Posterior cingulate gyrus (tissue), 11 donors: ENCODE measurements at regions of chr17 and their contacts with region 1.

Region 1: DNA sequence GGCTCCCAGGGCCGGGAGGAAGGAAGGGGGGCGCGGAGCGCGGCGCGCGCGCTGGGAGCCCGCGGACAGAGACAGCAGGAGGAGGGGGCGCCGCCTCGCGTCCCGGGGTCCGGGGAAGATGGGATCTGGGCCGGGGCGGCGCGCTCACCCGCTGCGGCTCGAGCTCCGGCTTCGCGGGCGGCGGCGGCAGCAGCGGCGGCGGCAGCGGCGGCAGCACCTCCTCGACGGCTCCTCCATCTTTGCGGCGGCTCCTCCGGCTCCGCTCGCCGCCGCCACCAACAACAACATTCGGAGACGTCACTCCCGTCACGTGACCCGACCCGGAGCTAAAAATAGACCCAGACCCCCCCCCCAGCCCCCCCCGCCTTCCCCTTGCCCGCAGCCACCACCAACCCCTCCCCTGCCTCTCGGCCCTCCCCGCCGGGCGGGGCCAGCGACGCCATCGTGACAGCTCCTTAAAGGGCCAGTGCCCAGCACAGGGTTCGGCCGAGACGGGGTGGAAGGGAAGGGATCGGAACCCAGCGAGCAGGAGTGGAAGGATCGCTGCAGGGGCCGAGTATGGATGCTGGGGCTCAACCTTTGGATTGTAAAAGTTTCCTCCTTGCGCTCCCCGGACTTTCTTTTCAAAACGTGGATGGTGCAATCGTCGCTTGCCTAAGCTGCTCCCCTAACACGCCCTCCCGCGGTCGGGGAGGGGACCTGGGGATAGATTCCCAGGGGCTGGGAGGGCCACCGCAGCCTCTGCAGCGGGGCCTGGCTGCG is at the start of gene HDAC5:
- DNase-seq: peak; percentile 95 to 100 (median 97)

Region 2: DNA sequence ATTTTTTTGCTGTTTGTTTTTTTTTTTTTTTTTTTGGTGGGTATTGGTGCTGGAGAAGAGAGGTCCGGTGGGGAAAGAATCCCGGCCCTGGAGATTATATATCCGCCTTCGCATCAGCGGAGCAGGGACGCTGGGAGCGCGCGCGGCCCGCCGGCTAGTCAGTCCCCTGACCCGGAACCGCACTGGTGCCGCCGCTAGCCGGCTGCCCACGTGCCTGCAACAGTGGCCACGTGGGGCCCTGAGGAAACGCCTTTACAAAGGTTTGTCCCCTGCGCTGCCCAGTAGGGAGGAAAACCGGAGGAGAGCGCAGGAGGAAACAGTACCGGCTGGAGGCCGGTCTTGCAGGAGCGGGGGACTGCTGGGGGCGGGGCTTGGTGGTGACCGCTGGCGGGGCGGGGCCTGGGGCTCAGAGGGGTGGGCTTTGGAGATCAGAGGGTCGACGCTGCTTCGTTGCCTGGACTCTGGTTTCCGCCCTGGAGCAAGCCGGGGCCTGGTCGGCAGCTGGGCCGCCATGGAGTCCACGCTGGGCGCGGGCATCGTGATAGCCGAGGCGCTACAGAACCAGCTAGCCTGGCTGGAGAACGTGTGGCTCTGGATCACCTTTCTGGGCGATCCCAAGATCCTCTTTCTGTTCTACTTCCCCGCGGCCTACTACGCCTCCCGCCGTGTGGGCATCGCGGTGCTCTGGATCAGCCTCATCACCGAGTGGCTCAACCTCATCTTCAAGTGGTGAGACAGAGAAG is 52.9 kb before region 1 on chr17 and contains the start of gene G6PC3:
- intact Hi-C with region 1: loop called (anchors 2 kb)
- DNase-seq: peak; percentile 93 to 99 (median 95)

Region 3: DNA sequence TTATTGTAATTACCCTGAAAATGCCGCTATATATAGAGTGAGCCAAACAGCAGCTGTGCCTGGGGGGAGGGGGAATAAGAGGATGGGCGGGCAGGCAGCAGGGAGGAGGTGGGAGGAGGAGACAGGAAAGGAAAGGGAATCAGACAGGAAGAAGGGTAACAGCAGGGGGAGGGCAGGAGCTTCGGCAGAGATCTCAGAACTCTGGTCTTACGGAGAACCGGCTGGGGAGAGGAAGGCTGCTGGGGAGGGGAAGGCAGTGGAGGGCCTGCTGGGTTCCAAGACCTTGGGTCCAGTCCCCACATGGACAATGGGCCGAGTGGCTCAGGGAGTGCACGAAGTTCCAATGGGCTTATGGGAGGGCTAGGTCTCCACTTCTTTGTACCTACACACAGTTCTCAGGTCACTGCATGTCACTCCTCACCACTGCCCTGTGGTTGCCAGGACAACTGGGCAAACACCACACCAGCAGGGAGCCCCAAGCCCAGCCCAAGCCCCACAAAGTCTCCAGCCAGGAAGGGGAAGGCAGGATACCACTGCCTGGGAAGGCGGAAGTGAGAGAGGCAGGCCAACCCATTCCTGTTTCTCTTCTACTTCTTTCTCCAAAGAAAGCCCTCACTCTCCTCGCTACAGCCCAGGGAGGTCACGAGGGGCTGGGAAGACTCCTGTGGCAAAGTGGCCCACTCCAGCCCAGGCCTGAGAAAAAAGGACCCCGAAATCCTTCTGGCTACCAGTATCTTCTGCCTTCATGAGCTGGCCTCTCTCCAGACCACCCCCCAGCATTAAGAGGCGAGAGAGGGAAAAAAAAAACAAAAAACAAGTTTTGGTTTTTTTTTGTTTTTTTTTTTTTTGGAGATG is 27.7 kb before region 1 on chr17:
- intact Hi-C with region 1: no loop called
- DNase-seq: peak; percentile 49 to 95 (median 64)

Region 4: GRCh38 chr17:44110823-44111633 is 12.5 kb before region 1 on chr17:
- intact Hi-C with region 1: loop called (anchors 1 kb)
- DNase-seq: peak; percentile 94 to 99 (median 98)

Region 5: GRCh38 chr17:44141717-44142285 is 18.3 kb after region 1 on chr17 and contains the start of gene HROB:
- intact Hi-C with region 1: loop called (anchors 2 kb)
- DNase-seq: peak; percentile 86 to 99 (median 97)